ENCODE measurements at regions of chr1 and their contacts with region 1.

Region 1: GRCh38 chr1:33094971-33095604 is 14.1 kb downstream of the AZIN2 start:
- DNase-seq: peak; percentile 70
- H3K4me3 Mint-ChIP-seq: no peak overlapping the region
- H3K27ac Mint-ChIP-seq: no peak overlapping the region
- H3K4me1 Mint-ChIP-seq: peaks cover 18% of the 10 kb centered on the region
- H3K27me3 Mint-ChIP-seq: no peaks in the 10 kb centered on the region
- CTCF ChIP-seq: peak; percentile 91

Region 2: GRCh38 chr1:33111970-33112369 is 16.9 kb after region 1 on chr1:
- CTCF ChIA-PET with region 1: interaction called, 17 read pairs
- POLR2A ChIA-PET with region 1: interaction called, 3 read pairs
- intact Hi-C with region 1: no loop called
- DNase-seq: peak; percentile 29
- H3K4me3 Mint-ChIP-seq: no peak overlapping the region
- H3K27ac Mint-ChIP-seq: no peak overlapping the region
- H3K4me1 Mint-ChIP-seq: no peaks in the 10 kb centered on the region
- H3K27me3 Mint-ChIP-seq: no peaks in the 10 kb centered on the region
- CTCF ChIP-seq: peak; percentile 27

Region 3: DNA sequence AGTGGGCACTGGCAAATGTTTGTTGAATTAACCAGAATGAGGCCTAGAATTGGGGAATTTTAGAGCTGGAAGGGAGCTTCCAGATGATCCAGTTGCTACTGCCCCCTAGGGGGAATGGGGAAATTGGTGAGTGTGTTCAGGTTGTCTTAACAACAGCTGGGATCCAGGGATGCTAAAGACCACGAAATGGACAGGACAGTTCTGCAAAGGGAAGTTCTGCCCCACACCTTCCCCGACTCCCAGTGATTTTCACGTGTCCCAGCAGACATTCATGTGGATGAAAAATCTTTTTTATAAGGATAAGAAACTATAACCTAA is 52.9 kb after region 1 on chr1:
- CTCF ChIA-PET with region 1: interaction called, 4 read pairs
- POLR2A ChIA-PET with region 1: no interaction called
- intact Hi-C with region 1: loop called (anchors 1 kb)
- DNase-seq: peak; percentile 55
- H3K4me3 Mint-ChIP-seq: no peak overlapping the region
- H3K27ac Mint-ChIP-seq: no peak overlapping the region
- H3K4me1 Mint-ChIP-seq: no peaks in the 10 kb centered on the region
- H3K27me3 Mint-ChIP-seq: no peaks in the 10 kb centered on the region
- CTCF ChIP-seq: peak; percentile 14

Region 4: GRCh38 chr1:33616773-33617172 is 521.7 kb after region 1 on chr1:
- CTCF ChIA-PET with region 1: interaction called, 5 read pairs
- POLR2A ChIA-PET with region 1: no interaction called
- intact Hi-C with region 1: loop called (anchors 2 kb)
- DNase-seq: no peak
- H3K4me3 Mint-ChIP-seq: no peak overlapping the region
- H3K27ac Mint-ChIP-seq: no peak overlapping the region
- H3K4me1 Mint-ChIP-seq: peaks cover 4% of the 10 kb centered on the region
- H3K27me3 Mint-ChIP-seq: peaks cover 85% of the 10 kb centered on the region
- CTCF ChIP-seq: no peak